H1 (cell line): ENCODE measurements at regions of chr3 and their contacts with region 1.

Region 1: DNA sequence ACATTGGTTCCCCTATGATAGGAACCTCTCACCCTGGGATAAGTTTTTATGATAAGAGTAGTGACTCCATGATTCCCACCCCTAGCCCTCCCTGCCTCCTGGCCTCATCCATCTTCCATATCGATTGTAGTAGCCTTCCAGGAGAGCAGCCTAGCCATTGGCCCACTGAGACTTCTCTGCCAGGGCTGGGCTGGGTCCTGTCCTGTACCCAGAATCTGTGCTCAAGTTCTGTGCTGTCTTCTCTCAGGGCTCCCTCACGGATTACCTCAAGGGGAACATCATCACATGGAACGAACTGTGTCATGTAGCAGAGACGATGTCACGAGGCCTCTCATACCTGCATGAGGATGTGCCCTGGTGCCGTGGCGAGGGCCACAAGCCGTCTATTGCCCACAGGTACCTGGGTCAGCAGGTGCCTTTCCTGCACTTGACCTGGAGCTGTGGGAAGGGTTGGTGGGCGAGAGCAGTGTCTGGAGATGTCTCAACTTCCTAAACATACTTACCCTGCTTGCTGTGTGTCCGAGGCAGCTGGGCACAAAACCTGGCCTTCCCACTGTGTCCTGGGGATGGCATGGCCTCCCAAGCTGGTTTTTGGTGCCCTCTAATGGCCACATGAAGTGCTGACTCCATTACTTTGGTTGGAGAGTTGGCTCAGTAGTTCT is 16.6 kb upstream of the EXOG start:
- DNase-seq: peak in 1 of 2 experiments; percentile 25
- H3K4me3 ChIP-seq: no peak overlapping the region
- H3K27ac ChIP-seq: no peak overlapping the region
- H3K4me1 ChIP-seq: no peaks in the 10 kb centered on the region; a peak in 2 of 7 replicates
- H3K27me3 ChIP-seq: no peaks in the 10 kb centered on the region
- CTCF ChIP-seq: peak in 2 of 3 experiments; percentile 81 to 88; a peak in 3 of 4 replicates
- EP300 ChIP-seq: no peak
- POLR2A ChIP-seq: no peak
- RAD21 ChIP-seq: peak; percentile 91 to 96

Region 2: GRCh38 chr3:38117748-38118420 is 361.7 kb before region 1 on chr3:
- CTCF ChIA-PET with region 1: interaction called, 11 read pairs
- POLR2A ChIA-PET with region 1: no interaction called
- DNase-seq: peak in 1 of 2 experiments; percentile 87
- H3K4me3 ChIP-seq: no peak overlapping the region
- H3K27ac ChIP-seq: no peak overlapping the region
- H3K4me1 ChIP-seq: no peaks in the 10 kb centered on the region
- H3K27me3 ChIP-seq: no peaks in the 10 kb centered on the region
- CTCF ChIP-seq: peak in 2 of 3 experiments; percentile 83 to 96; a peak in 3 of 4 replicates
- EP300 ChIP-seq: no peak
- POLR2A ChIP-seq: no peak; a peak in 1 of 3 replicates
- RAD21 ChIP-seq: peak; percentile 86 to 87

Region 3: GRCh38 chr3:38346587-38347410 is 132.8 kb before region 1 on chr3 and contains the start of gene XYLB:
- CTCF ChIA-PET with region 1: interaction called, 47 read pairs
- POLR2A ChIA-PET with region 1: no interaction called
- DNase-seq: peak; percentile 33 to 86
- H3K4me3 ChIP-seq: peak within 1 kb of the TSS; percentile 52 to 71 (median 65)
- H3K27ac ChIP-seq: no peak within 1 kb of the TSS
- H3K4me1 ChIP-seq: 0 out of 7 replicates have a peak, but pooled peaks cover 0 to 3% (median 0%) of the 10 kb centered on the region in 4 experiments
- H3K27me3 ChIP-seq: peaks cover 0 to 14% (median 4%) of the 10 kb centered on the region in 4 experiments; a peak in 4 of 7 replicates
- CTCF ChIP-seq: peak; percentile 72 to 85 (median 76)
- EP300 ChIP-seq: no peak
- POLR2A ChIP-seq: 0 out of 3 replicates have a peak, but pooled peaks of 1 of the 2 experiments have one; percentile 26
- RAD21 ChIP-seq: peak; percentile 59 to 64
- total RNA-seq, gene XYLB: 5.3 and 5.5 TPM in 2 replicates

Region 4: DNA sequence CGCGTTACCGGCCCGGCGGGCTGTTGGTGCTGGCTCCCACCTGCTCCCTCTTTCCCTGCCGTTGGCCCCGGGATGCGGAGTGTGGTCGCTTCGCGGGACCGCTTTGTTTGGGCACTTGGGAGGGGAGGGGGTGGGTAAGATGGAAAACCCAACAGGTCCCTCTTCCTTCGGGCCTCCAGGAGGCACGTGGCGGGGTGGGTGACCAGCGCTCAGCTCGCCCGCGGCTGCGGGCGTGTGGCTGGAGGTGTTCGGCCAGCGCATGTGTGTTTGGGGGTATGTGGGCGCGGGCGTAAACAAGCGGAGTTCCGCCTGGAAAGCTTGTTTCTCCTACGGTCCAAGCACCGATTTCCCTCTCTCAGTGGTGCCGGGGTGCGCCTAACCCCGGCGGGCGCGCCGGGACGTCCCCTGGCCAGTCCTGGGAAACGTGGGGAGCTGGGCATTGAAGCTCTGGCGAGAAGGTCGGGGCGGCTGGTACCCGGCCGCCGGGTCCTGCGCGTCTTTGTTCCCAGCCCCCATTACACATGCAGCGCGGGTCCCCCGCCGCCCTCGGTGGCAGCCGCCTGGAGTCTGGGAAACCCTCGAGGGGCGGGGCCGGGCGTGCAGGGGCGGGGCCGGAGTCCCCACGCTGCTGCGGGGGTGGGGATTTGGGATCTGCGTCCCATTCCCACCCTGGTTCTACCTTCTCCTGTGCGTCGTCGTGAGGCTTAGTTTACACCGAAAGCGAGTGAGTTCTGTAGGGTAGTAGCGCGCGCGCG is 24.5 kb before region 1 on chr3:
- CTCF ChIA-PET with region 1: interaction called, 16 read pairs
- POLR2A ChIA-PET with region 1: interaction called, 6 read pairs
- DNase-seq: peak; percentile 53 to 92
- H3K4me3 ChIP-seq: peak overlapping the region; percentile 74 to 99 (median 91)
- H3K27ac ChIP-seq: peak overlapping the region; percentile 99
- H3K4me1 ChIP-seq: peaks cover 10 to 24% (median 16%) of the 10 kb centered on the region in 4 experiments
- H3K27me3 ChIP-seq: no peaks in the 10 kb centered on the region
- CTCF ChIP-seq: no peak
- EP300 ChIP-seq: no peak
- POLR2A ChIP-seq: peak; percentile 36 to 92
- RAD21 ChIP-seq: 0 out of 4 replicates have a peak, but pooled peaks of 1 of the 2 experiments have one; percentile 2

Region 5: GRCh38 chr3:38496131-38496910 is 16.8 kb after region 1 on chr3 and contains the start of gene EXOG:
- CTCF ChIA-PET with region 1: interaction called, 28 read pairs
- POLR2A ChIA-PET with region 1: interaction called, 6 read pairs
- DNase-seq: peak; percentile 82 to 98
- H3K4me3 ChIP-seq: peak within 1 kb of the TSS; percentile 51 to 85 (median 69)
- H3K27ac ChIP-seq: peak within 1 kb of the TSS; percentile 88
- H3K4me1 ChIP-seq: peaks cover 0 to 2% (median 0%) of the 10 kb centered on the region in 4 experiments; a peak in 1 of 7 replicates
- H3K27me3 ChIP-seq: no peaks in the 10 kb centered on the region
- CTCF ChIP-seq: peak; percentile 75 to 96 (median 84)
- EP300 ChIP-seq: 0 out of 3 replicates have a peak, but pooled peaks of 1 of the 2 experiments have one; percentile 31
- POLR2A ChIP-seq: peak; percentile 72 to 88
- RAD21 ChIP-seq: peak; percentile 56 to 77; a peak in 3 of 4 replicates
- total RNA-seq, gene EXOG: 12.2 and 12.9 TPM in 2 replicates